Endothelial cell of umbilical vein (primary cell): ENCODE measurements at regions of chr6 and their contacts with region 1.

Region 1: GRCh38 chr6:30541515-30542403 is 14.5 kb downstream of the GNL1 start:
- DNase-seq: peak; percentile 91
- H3K4me3 ChIP-seq: peak overlapping the region; percentile 18 to 47 (median 21)
- H3K27ac ChIP-seq: peak overlapping the region; percentile 81
- H3K4me1 ChIP-seq: peaks cover 29% of the 10 kb centered on the region
- H3K27me3 ChIP-seq: no peaks in the 10 kb centered on the region
- CTCF ChIP-seq: peak; percentile 96 to 99
- POLR2A ChIP-seq: peak; percentile 55

Region 2: DNA sequence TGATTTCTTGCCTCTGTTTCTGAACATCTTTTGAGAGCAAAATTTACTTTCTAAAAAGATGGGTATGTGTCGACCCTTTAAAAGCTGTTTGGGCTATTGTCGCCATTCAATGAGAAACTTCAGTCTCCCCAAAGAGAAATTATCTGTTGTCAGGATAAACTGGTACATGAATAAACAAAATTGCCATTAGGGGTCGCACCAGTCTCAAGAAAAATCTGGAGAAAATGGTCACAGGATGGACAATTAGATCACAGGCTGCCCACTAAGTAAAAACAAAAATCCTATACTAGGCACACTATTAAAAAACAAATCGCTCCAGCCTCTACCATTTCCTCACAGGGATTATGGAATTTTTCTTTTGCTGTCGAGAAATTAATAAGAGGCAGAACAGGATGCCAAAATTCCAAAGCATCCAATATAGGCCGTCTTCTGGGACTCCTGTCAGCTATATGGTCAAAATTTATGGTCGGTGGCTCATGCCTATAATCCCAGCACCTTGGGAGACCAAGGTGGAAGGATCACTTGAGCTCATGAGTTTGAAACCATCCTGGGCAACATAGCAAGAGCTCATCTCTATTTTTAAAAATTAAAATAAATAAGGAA is 58.0 kb before region 1 on chr6:
- CTCF ChIA-PET with region 1: interaction called, 522 read pairs
- POLR2A ChIA-PET with region 1: interaction called, 4 read pairs
- dilution Hi-C with region 1: no loop called
- intact Hi-C with region 1: loop called (anchors 1 kb)
- DNase-seq: peak; percentile 84
- H3K4me3 ChIP-seq: no peak overlapping the region
- H3K27ac ChIP-seq: no peak overlapping the region
- H3K4me1 ChIP-seq: peaks cover 11% of the 10 kb centered on the region
- H3K27me3 ChIP-seq: peaks cover 29 to 32% of the 10 kb centered on the region in 2 experiments
- CTCF ChIP-seq: peak; percentile 36 to 40
- POLR2A ChIP-seq: no peak

Region 3: GRCh38 chr6:30508890-30509736 is 32.6 kb before region 1 on chr6:
- CTCF ChIA-PET with region 1: interaction called, 11 read pairs
- POLR2A ChIA-PET with region 1: no interaction called
- dilution Hi-C with region 1: no loop called
- intact Hi-C with region 1: no loop called
- DNase-seq: peak; percentile 28
- H3K4me3 ChIP-seq: no peak overlapping the region
- H3K27ac ChIP-seq: peak overlapping the region; percentile 88
- H3K4me1 ChIP-seq: peaks cover 12% of the 10 kb centered on the region
- H3K27me3 ChIP-seq: no peaks in the 10 kb centered on the region
- CTCF ChIP-seq: no peak
- POLR2A ChIP-seq: no peak

Region 4: DNA sequence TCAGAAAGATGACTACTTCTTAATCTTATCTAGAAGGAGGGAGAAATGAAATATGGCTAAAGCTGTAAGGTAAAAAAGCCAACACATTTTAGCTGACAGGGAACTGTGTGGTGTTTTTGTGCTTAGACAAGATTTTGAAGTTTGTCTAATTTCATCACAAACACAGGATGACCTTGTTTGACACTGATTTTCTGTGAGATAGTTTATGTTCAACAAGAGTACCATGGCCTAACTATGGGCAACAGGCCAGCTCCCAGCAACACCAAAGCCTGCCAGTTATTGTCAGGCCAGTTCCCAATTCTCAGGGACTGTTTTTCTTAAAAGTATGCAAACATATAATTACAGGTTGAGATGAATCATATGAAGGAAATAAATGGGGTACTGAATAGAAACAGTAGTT is 24.0 kb after region 1 on chr6:
- CTCF ChIA-PET with region 1: interaction called, 20 read pairs
- POLR2A ChIA-PET with region 1: no interaction called
- dilution Hi-C with region 1: no loop called
- intact Hi-C with region 1: no loop called
- DNase-seq: peak; percentile 51
- H3K4me3 ChIP-seq: no peak overlapping the region
- H3K27ac ChIP-seq: no peak overlapping the region
- H3K4me1 ChIP-seq: peaks cover 6% of the 10 kb centered on the region
- H3K27me3 ChIP-seq: no peaks in the 10 kb centered on the region
- CTCF ChIP-seq: no peak
- POLR2A ChIP-seq: no peak

Region 5: DNA sequence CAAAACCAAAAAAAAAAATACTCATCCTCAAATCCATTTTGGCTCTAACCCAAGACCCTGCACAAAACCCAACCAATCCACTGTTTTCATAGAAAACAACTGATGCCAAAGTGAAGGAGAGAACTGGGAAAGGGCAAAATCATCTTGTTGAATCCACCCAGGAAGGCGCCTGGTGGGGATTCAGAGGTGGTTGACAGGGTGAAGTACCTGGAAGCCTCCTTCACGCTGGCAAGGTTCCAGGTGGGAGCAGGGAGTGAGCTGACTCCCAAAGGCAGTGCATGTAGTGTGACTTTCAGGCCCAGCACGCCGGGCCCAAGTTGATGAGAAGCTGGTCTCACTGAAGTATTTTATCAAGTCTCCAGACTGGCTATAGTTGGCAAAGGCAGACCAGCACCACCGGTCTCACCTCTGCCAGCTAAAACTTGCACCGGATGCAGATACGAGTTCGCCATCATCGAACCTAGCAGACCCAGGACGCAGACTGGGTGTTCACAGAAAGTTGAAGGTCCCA is 58.7 kb after region 1 on chr6:
- CTCF ChIA-PET with region 1: interaction called, 53 read pairs
- POLR2A ChIA-PET with region 1: no interaction called
- dilution Hi-C with region 1: no loop called
- intact Hi-C with region 1: loop called (anchors 1 kb)
- DNase-seq: no peak
- H3K4me3 ChIP-seq: no peak overlapping the region
- H3K27ac ChIP-seq: no peak overlapping the region
- H3K4me1 ChIP-seq: peaks cover 8% of the 10 kb centered on the region
- H3K27me3 ChIP-seq: no peaks in the 10 kb centered on the region
- CTCF ChIP-seq: no peak
- POLR2A ChIP-seq: peak; percentile 20

Region 6: GRCh38 chr6:31509988-31510387 is 968.2 kb after region 1 on chr6:
- CTCF ChIA-PET with region 1: no interaction called
- POLR2A ChIA-PET with region 1: no interaction called
- dilution Hi-C with region 1: no loop called
- intact Hi-C with region 1: no loop called
- DNase-seq: no peak
- H3K4me3 ChIP-seq: no peak overlapping the region
- H3K27ac ChIP-seq: no peak overlapping the region
- H3K4me1 ChIP-seq: peaks cover 3% of the 10 kb centered on the region
- H3K27me3 ChIP-seq: no peaks in the 10 kb centered on the region
- CTCF ChIP-seq: no peak
- POLR2A ChIP-seq: no peak